ENCODE measurements at regions of chr12 and their contacts with region 1.

Region 1: GRCh38 chr12:114403011-114403689 is 2.8 kb downstream of the TBX5 start:
- DNase-seq: peak; percentile 69
- ATAC-seq: peak; percentile 7
- H3K4me3 ChIP-seq: peak overlapping the region; percentile 97
- H3K27ac ChIP-seq: peak overlapping the region; percentile 100
- H3K4me1 ChIP-seq: peaks cover 21% of the 10 kb centered on the region
- H3K27me3 ChIP-seq: no peaks in the 10 kb centered on the region
- CTCF ChIP-seq: peak; percentile 38
- POLR2A ChIP-seq: no peak
- RAD21 ChIP-seq: peak; percentile 21

Region 2: DNA sequence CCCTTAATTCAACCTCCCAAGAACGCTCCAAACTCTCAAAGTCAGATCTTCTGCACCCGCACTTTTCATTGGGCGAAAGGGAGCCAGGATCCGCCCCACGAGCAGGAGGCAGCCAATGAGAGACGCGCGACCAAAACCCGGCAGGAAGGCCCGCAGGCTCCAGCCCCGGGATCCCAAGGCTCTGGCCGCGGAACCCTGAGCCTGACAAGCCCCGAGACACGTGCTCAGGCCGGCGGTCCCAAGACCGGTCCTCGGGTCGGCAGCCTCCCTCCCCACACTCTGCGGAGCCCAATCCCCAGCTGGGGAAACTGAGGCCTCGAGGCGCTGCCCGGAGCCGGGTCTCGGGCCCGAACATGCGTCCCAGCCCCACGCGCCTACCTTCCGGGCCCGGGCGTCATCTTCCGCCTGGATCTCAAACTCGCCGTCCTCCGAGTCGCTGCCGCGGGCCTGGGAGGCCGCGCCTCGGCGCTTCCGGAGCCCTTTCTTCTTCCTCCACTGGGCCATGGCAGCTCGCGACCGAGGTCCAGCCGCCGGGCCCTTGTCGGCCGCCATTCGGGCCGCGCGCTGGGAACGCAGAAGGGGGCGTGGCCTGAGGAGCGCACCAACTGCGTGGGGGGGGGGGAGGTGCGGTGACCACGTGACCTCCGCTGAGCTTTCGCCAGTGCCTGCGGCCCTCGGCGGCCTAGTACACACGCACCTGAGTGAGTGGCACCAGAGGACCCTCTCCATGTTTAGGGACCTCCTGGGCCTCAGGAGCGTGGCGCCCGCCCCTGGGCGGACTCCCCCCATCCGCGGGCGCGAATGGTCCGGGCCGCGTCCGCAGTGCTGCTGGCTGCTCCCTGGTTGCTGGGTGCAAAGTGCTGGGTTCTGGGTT is 1218.0 kb before region 1 on chr12 and contains the starts of genes DDX54 and RITA1:
- CTCF ChIA-PET with region 1: no interaction called
- POLR2A ChIA-PET with region 1: no interaction called
- dilution Hi-C with region 1: no loop called
- in situ Hi-C with region 1: loop called (anchors 25 kb)
- intact Hi-C with region 1: no loop called
- DNase-seq: peak; percentile 86
- ATAC-seq: peak; percentile 92
- H3K4me3 ChIP-seq: peak within 1 kb of the TSS; percentile 67
- H3K27ac ChIP-seq: peak within 1 kb of the TSS; percentile 94
- H3K4me1 ChIP-seq: peaks cover 5% of the 10 kb centered on the region; the same call in 1 of the 2 replicates
- H3K27me3 ChIP-seq: no peaks in the 10 kb centered on the region
- CTCF ChIP-seq: no peak
- POLR2A ChIP-seq: peak; percentile 90
- RAD21 ChIP-seq: no peak
- total RNA-seq, gene DDX54: 23.8 and 24.4 TPM in 2 replicates
- total RNA-seq, gene RITA1: 14.7 and 15.0 TPM in 2 replicates

Region 3: DNA sequence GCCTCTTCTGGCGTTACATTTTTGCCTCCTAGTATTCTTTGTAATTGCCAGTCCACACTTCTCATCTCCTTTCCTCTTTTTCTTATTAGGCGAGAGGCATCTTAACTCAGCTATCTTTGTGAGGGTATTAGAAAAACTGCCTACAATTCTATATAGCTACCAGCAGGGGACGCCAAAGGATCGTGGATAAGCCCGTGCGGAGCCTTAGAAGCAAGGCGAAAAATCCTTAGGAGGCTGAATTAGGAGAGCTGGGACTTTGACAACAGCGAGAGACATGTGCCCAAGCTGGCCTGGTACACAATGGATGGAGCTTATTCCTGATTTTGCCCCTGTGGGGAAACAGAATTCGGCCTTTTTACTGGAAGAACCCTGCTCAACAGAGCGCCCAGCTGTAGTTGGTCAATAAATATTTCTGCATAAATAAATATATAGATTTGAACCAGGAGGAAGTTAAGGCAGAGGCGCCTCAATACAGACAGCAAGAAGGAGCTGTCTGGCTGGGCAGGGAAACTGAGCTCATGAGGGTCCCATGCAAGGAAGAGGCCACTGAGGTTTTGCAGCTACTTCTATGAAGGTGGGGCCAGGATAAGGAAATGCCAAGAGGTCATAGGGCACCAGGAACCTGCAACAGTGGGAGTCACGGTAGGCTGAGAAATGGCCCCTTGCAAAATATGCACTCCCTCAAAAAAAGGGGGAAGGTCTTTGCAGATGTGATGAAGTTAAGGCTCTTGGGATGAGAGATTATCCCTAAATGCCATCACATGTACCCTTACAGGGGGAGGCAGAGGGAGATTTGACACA is 422.4 kb before region 1 on chr12:
- CTCF ChIA-PET with region 1: no interaction called
- POLR2A ChIA-PET with region 1: no interaction called
- dilution Hi-C with region 1: no loop called
- in situ Hi-C with region 1: no loop called
- intact Hi-C with region 1: loop called (anchors 5 kb)
- DNase-seq: peak; percentile 74
- ATAC-seq: peak; percentile 96
- H3K4me3 ChIP-seq: no peak overlapping the region
- H3K27ac ChIP-seq: no peak overlapping the region
- H3K4me1 ChIP-seq: no peaks in the 10 kb centered on the region
- H3K27me3 ChIP-seq: peaks cover 15% of the 10 kb centered on the region
- CTCF ChIP-seq: peak; percentile 99
- POLR2A ChIP-seq: peak; percentile 55; the same call in 1 of the 2 replicates
- RAD21 ChIP-seq: peak; percentile 99

Region 4: DNA sequence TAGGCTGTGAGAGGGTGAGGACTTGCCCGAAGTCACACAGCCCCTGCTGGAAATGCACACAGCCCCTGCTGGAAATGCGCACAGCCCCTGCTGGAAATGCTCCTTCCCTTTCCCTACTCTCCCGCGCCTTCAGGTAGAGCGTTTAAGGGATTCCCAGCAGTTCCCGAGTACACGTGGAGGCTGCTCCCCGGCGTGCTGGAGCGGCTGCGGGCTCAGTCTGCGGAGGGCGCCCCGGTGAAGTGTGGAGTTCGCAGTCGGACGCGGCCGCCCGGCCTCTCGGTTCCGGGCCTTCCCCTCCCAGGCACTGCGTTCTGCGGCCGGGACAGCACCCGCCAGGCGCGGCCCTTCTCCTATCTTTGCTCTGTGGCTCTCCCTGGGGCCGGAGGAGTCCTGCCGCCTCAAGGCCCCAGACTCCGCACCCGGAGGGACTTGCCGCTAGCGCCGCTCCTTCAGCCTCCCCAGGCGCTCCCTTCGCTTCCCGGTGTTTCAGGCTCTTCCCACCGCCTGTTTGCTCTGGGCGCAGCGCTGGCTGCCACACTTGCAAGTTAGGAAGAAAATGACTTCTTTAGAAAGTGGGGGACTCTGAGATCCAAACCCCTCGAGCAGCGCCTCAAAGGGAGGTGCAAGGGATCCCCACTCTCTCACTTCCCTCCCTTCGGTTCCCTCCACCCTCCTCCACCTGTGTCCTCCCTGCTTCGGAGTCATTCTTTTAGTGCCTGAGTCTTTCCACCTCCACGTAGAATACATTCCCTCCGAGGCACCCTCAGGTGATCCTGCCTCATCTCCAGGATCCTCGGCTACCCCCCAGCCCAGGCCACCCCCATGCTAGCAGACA is 11.1 kb after region 1 on chr12:
- CTCF ChIA-PET with region 1: no interaction called
- POLR2A ChIA-PET with region 1: no interaction called
- dilution Hi-C with region 1: no loop called
- in situ Hi-C with region 1: no loop called
- intact Hi-C with region 1: loop called (anchors 1 kb)
- DNase-seq: peak; percentile 46
- ATAC-seq: peak; percentile 43
- H3K4me3 ChIP-seq: peak overlapping the region; percentile 37
- H3K27ac ChIP-seq: peak overlapping the region; percentile 100
- H3K4me1 ChIP-seq: peaks cover 30% of the 10 kb centered on the region
- H3K27me3 ChIP-seq: no peaks in the 10 kb centered on the region
- CTCF ChIP-seq: no peak
- POLR2A ChIP-seq: no peak
- RAD21 ChIP-seq: no peak

Region 5: DNA sequence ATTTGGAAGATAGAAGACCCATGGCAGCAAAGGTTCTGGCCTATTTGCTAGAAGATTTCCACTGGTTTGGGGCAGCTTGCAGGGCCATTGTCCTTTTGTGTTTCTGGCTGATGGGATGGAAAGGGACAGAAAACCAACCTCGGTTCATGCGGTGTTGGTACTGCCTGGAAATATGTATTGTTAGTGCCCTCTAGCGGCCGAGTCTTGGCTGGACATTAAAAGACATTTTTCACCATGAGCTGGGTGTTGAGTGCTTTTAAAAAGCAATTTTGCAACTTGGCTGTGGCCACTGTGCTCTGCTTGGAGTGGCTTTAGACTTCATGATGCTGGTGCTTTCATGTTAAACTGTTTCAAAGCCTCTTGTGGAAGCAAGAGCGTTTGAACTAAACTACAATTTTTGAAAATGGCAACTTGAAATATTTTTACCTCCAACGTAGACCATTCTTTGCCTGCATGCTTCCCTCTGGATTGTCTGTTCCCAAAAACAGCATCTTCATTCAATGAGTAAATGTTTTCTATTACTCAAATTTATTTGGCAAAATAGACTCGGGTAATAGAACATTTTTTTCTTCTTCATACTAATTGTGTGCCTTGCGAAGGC is 105.5 kb after region 1 on chr12:
- CTCF ChIA-PET with region 1: interaction called, 3 read pairs
- POLR2A ChIA-PET with region 1: no interaction called
- dilution Hi-C with region 1: no loop called
- in situ Hi-C with region 1: no loop called
- intact Hi-C with region 1: loop called (anchors 1 kb)
- DNase-seq: peak; percentile 79
- ATAC-seq: peak; percentile 80
- H3K4me3 ChIP-seq: no peak overlapping the region
- H3K27ac ChIP-seq: no peak overlapping the region
- H3K4me1 ChIP-seq: peaks cover 5% of the 10 kb centered on the region
- H3K27me3 ChIP-seq: no peaks in the 10 kb centered on the region; the same call in 1 of the 2 replicates
- CTCF ChIP-seq: peak; percentile 87
- POLR2A ChIP-seq: no peak
- RAD21 ChIP-seq: peak; percentile 89

Region 6: DNA sequence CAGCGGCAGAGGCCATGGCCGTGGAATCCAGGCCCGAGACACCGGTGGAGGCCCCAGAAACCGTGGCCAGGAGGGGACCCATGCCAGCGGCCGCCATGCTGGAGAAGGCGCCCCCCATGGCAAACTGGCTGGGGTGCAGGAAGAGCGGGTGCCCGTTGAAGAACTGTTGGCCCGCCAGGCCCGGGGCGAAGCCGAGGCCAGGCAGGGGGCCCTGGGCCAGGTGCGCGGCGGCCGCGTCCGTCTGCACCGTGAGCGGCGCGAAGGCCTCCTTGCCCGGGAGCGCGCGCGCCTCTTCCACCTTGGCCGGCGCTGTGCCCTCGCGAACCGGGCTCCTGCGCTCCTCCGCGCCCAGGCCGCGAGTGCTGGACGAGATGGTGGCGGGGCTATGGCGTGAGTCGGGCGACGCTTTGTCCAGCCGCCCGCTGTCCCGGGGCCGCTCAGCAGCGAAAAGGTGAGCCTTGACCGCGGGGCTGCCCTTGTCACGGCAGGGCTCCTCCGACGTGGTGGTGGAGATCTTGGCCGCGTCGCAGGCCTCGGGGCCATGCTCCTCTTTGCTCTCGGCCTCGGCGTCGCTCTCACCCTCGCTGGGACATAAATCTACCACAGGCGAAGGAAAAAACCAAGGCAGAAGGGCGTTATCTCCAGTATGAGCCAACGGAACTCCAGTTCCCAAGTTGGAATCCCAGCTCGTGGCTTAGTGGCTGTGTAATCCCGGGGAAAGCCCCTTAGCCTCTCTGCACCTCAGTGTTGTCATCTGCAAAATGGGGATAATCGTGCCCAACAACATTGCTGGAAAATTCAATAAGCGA is 271.3 kb after region 1 on chr12:
- CTCF ChIA-PET with region 1: no interaction called
- POLR2A ChIA-PET with region 1: no interaction called
- dilution Hi-C with region 1: no loop called
- in situ Hi-C with region 1: loop called (anchors 5 kb)
- intact Hi-C with region 1: loop called (anchors 5 kb)
- DNase-seq: peak; percentile 64
- ATAC-seq: no peak
- H3K4me3 ChIP-seq: peak overlapping the region; percentile 17
- H3K27ac ChIP-seq: peak overlapping the region; percentile 92
- H3K4me1 ChIP-seq: peaks cover 16% of the 10 kb centered on the region
- H3K27me3 ChIP-seq: no peaks in the 10 kb centered on the region
- CTCF ChIP-seq: no peak
- POLR2A ChIP-seq: peak; percentile 42; the same call in 1 of the 2 replicates
- RAD21 ChIP-seq: no peak